Esophagus muscularis mucosa (tissue), 4 donors: ENCODE measurements at regions of chr10 and their contacts with region 1.

Region 1: GRCh38 chr10:34666008-34666705 is 148.9 kb downstream of the PARD3 start:
- DNase-seq: no peak
- H3K4me3 ChIP-seq: no peak overlapping the region
- H3K27ac ChIP-seq: no peak overlapping the region
- H3K4me1 ChIP-seq: peaks cover 8 to 42% (median 31%) of the 10 kb centered on the region in 4 donors
- H3K27me3 ChIP-seq: no peaks in the 10 kb centered on the region
- CTCF ChIP-seq: peak; percentile 61 to 79 (median 65)
- EP300 ChIP-seq: no peak
- POLR2A ChIP-seq: no peak

Region 2: DNA sequence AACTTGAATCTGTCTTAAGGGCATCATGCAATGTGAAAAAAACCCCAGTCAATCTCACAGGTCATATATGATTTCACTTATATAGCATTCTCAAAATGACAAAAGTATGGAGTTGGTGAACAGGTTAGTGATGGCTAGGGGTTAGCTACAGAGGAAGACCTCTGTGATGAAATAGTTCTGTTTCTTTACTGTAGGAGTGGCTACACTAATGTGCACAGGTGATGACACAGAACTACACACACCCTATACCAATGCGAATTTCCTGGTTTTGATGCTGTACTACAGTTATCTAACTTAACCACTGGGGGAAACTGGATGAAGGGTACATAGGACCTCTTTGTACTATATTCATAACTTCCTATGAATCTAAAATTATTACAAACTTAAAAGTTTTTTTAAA is 392.8 kb before region 1 on chr10:
- intact Hi-C with region 1: no loop called
- DNase-seq: no peak
- H3K4me3 ChIP-seq: no peak overlapping the region
- H3K27ac ChIP-seq: no peak overlapping the region
- H3K4me1 ChIP-seq: no peaks in the 10 kb centered on the region
- H3K27me3 ChIP-seq: no peaks in the 10 kb centered on the region
- CTCF ChIP-seq: no peak
- EP300 ChIP-seq: no peak
- POLR2A ChIP-seq: no peak

Region 3: GRCh38 chr10:34808801-34809745 is 142.9 kb after region 1 on chr10:
- intact Hi-C with region 1: loop called (anchors 5 kb)
- DNase-seq: no peak
- H3K4me3 ChIP-seq: peak overlapping the region; percentile 18 to 42 (median 30)
- H3K27ac ChIP-seq: peak overlapping the region; percentile 70 to 76 (median 70)
- H3K4me1 ChIP-seq: peaks cover 38 to 65% (median 56%) of the 10 kb centered on the region in 4 donors
- H3K27me3 ChIP-seq: no peaks in the 10 kb centered on the region
- CTCF ChIP-seq: no peak
- EP300 ChIP-seq: no peak
- POLR2A ChIP-seq: no peak

Region 4: GRCh38 chr10:34960983-34961382 is 294.8 kb after region 1 on chr10:
- intact Hi-C with region 1: loop called (anchors 10 kb)
- DNase-seq: no peak
- H3K4me3 ChIP-seq: no peak overlapping the region
- H3K27ac ChIP-seq: no peak overlapping the region
- H3K4me1 ChIP-seq: no peaks in the 10 kb centered on the region
- H3K27me3 ChIP-seq: no peaks in the 10 kb centered on the region
- CTCF ChIP-seq: peak in 1 of 3 experiments; percentile 26
- EP300 ChIP-seq: no peak
- POLR2A ChIP-seq: no peak